CD8-positive, alpha-beta T cell (primary cell): ENCODE measurements at regions of chr2 and their contacts with region 1.

Region 1: DNA sequence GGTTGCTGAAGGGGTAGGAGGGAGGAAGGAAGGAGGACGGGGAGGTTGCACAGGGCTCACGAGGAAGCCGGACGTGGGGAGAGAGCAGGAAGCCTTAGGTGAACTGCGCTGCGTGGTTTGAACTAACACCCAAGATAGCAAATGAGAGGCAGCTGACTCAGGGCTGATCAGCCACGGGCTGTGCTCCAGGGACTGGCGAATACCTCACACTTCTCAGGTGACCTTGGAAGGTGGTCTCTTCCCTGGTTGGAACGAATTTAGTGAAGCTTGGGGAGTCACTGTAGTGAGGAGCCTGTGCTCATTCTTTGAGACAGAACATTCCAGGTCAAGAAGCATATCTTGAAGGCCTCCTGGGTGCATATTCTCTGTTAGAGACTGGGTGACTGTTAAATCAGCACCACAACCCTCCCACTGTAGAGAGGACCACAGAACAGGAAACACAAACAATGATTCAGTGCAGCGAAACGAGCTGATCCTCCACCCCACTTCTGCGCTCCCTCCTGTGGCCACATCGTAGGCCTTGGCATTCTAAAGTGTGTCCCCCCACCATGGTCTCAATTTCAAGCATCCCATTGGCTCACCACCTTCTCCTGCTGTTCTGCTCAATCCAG is 33.8 kb downstream of the TOGARAM2 start:
- DNase-seq: peak; percentile 46 to 93 (median 82)
- ATAC-seq: peak; percentile 57
- H3K4me3 ChIP-seq: peak overlapping the region; percentile 27 to 37
- H3K4me3 Mint-ChIP-seq: peak overlapping the region; percentile 75
- H3K27ac ChIP-seq: peak overlapping the region; percentile 85 to 98
- H3K27ac Mint-ChIP-seq: peak overlapping the region; percentile 99
- H3K4me1 ChIP-seq: peaks cover 72% of the 10 kb centered on the region
- H3K4me1 Mint-ChIP-seq: peaks cover 76% of the 10 kb centered on the region
- H3K27me3 ChIP-seq: no peaks in the 10 kb centered on the region
- H3K27me3 Mint-ChIP-seq: no peaks in the 10 kb centered on the region
- CTCF ChIP-seq: peak; percentile 63

Region 2: DNA sequence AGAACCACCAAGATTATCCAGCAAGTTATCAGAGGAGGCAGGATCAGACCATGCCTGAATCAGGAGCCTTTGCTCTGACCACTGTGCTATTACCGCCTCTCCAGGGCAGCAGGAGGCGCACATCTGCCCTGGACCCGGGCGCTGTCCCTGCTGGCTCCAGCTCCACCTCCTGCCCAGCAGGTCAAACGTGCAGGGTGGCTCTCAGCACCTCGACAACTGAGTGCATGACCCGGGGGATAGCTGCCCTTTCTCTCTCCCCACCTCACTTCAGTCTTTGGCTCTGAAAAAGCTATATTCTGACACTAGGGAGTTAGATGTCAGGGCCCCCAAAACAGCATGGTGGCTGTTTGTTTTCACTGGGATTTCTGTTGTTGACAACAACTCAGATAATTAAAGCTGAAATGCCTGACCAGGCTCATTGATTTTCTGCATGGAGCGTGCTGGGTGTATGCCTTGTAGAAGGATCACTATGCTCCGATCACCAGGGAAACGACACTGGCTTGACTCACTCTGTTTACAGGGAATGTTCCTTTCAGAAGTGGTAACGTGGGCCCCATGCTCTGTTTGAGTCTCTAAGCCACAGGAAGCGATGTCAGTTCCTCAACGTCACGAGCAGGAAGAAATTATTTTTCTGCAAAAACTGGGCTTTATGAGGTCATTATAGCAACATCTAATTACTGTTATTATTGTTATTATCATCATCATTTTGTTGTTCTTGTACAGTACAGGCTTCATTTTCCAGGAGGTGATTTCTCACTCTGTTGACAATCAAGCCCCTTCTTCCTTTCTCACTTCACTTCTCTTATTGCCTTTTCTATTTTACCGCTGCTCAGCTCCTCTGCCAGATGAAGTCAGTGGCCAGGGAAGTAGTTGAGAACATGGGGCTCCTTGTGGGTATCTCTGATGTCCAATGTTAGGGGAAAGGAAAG is 393.5 kb before region 1 on chr2:
- CTCF ChIA-PET with region 1: no interaction called
- POLR2A ChIA-PET with region 1: no interaction called
- intact Hi-C with region 1: loop called in 1 of 2 experiments (anchors 2 kb)
- DNase-seq: peak; percentile 60 to 96 (median 78)
- ATAC-seq: peak; percentile 85
- H3K4me3 ChIP-seq: peak overlapping the region; percentile 19 to 33
- H3K4me3 Mint-ChIP-seq: peak overlapping the region; percentile 68
- H3K27ac ChIP-seq: peak overlapping the region; percentile 86 to 98
- H3K27ac Mint-ChIP-seq: peak overlapping the region; percentile 99
- H3K4me1 ChIP-seq: peaks cover 87% of the 10 kb centered on the region
- H3K4me1 Mint-ChIP-seq: peaks cover 92% of the 10 kb centered on the region
- H3K27me3 ChIP-seq: no peaks in the 10 kb centered on the region
- H3K27me3 Mint-ChIP-seq: no peaks in the 10 kb centered on the region
- CTCF ChIP-seq: no peak

Region 3: DNA sequence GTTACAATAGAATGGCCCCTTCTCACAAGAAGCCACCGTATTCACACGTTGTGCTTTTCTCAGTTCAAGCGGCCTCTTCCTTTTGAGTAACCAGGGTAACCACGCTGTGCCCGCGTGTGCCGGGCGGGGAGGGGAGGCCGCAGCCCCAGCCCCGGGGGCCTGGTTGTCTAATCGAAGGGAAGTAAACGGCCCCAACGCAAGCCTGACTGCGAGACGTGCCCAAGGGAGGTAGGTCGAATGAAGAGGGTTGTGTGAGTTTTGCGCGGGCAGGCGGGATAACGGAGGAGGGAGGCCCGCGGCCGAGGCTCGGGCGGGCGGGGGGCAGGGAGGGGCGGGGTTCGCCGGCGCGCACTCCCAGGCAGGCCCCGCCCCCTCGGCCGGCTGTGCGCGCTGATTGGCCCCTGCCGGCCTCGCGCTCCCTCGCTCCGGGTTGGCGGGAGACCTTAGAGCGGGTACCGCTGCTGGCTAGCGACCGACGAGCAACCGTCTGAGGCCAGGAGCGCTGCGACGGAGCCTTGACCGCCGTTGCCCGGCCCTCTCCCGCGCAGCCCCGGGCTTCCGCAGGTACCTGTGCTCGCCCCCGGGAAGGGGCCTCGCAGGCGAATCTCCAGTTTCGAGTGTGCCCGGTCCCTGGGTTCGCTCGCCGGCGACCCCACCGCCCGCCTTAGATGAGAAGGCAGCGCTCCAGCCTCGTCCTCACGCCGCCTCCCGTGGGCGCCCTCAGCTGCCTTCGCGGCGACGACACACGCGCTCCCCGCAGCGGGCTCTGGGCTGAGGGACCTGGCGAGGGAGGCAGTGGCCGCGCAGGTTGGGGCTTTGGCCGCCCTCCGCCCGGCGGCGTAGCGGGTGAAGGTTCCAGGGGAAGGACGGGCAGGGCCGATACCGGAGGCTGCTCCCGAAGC is 204.3 kb before region 1 on chr2 and contains the start of gene SPDYA:
- CTCF ChIA-PET with region 1: no interaction called
- POLR2A ChIA-PET with region 1: no interaction called
- intact Hi-C with region 1: loop called in 1 of 2 experiments (anchors 10 kb)
- DNase-seq: peak; percentile 52 to 89 (median 76)
- ATAC-seq: peak; percentile 92
- H3K4me3 ChIP-seq: peak within 1 kb of the TSS; percentile 62 to 69
- H3K4me3 Mint-ChIP-seq: peak within 1 kb of the TSS; percentile 86
- H3K27ac ChIP-seq: peak within 1 kb of the TSS; percentile 24 to 69
- H3K27ac Mint-ChIP-seq: no peak within 1 kb of the TSS
- H3K4me1 ChIP-seq: peaks cover 6% of the 10 kb centered on the region
- H3K4me1 Mint-ChIP-seq: peaks cover 18% of the 10 kb centered on the region
- H3K27me3 ChIP-seq: no peaks in the 10 kb centered on the region
- H3K27me3 Mint-ChIP-seq: no peaks in the 10 kb centered on the region
- CTCF ChIP-seq: no peak
- total RNA-seq, gene SPDYA: 11.8 to 12.4 TPM

Region 4: GRCh38 chr2:28894470-28895177 is 120.3 kb before region 1 on chr2 and contains the start of gene WDR43:
- CTCF ChIA-PET with region 1: no interaction called
- POLR2A ChIA-PET with region 1: interaction called, 5 read pairs
- intact Hi-C with region 1: loop called (anchors 1 to 2 kb)
- DNase-seq: peak; percentile 94 to 99 (median 98)
- ATAC-seq: peak; percentile 98
- H3K4me3 ChIP-seq: peak within 1 kb of the TSS; percentile 81 to 89
- H3K4me3 Mint-ChIP-seq: peak within 1 kb of the TSS; percentile 96
- H3K27ac ChIP-seq: peak within 1 kb of the TSS; percentile 68 to 81
- H3K27ac Mint-ChIP-seq: peak within 1 kb of the TSS; percentile 92
- H3K4me1 ChIP-seq: peaks cover 37% of the 10 kb centered on the region
- H3K4me1 Mint-ChIP-seq: peaks cover 44% of the 10 kb centered on the region
- H3K27me3 ChIP-seq: no peaks in the 10 kb centered on the region
- H3K27me3 Mint-ChIP-seq: no peaks in the 10 kb centered on the region
- CTCF ChIP-seq: no peak
- total RNA-seq, gene WDR43: 89.2 to 90.0 TPM

Region 5: DNA sequence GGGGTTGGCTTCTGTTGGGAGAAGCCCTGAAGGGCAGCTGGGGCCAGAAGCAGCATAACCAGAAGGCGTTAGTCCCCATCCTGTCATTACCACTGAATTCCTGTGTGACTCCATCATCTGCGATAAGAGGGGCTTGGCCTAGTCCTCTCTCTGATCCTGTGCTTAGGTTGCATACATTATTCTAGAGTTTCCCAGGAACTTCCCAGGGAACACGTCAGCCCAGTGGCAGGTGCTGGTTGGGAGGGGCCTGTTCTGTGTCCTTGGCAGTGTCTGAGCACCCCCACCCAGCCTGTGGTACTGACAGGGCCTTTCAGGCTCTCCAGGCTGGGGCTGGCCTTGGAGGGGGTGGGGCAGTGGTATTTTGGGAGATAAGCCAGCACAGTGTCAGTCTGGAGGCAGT is 38.3 kb before region 1 on chr2:
- CTCF ChIA-PET with region 1: interaction called, 10 read pairs
- POLR2A ChIA-PET with region 1: no interaction called
- intact Hi-C with region 1: loop called in 1 of 2 experiments (anchors 5 kb)
- DNase-seq: no peak
- ATAC-seq: no peak
- H3K4me3 ChIP-seq: no peak overlapping the region
- H3K4me3 Mint-ChIP-seq: no peak overlapping the region
- H3K27ac ChIP-seq: no peak overlapping the region
- H3K27ac Mint-ChIP-seq: no peak overlapping the region
- H3K4me1 ChIP-seq: peaks cover 8% of the 10 kb centered on the region
- H3K4me1 Mint-ChIP-seq: peaks cover 14% of the 10 kb centered on the region
- H3K27me3 ChIP-seq: no peaks in the 10 kb centered on the region
- H3K27me3 Mint-ChIP-seq: no peaks in the 10 kb centered on the region
- CTCF ChIP-seq: no peak

Region 6: DNA sequence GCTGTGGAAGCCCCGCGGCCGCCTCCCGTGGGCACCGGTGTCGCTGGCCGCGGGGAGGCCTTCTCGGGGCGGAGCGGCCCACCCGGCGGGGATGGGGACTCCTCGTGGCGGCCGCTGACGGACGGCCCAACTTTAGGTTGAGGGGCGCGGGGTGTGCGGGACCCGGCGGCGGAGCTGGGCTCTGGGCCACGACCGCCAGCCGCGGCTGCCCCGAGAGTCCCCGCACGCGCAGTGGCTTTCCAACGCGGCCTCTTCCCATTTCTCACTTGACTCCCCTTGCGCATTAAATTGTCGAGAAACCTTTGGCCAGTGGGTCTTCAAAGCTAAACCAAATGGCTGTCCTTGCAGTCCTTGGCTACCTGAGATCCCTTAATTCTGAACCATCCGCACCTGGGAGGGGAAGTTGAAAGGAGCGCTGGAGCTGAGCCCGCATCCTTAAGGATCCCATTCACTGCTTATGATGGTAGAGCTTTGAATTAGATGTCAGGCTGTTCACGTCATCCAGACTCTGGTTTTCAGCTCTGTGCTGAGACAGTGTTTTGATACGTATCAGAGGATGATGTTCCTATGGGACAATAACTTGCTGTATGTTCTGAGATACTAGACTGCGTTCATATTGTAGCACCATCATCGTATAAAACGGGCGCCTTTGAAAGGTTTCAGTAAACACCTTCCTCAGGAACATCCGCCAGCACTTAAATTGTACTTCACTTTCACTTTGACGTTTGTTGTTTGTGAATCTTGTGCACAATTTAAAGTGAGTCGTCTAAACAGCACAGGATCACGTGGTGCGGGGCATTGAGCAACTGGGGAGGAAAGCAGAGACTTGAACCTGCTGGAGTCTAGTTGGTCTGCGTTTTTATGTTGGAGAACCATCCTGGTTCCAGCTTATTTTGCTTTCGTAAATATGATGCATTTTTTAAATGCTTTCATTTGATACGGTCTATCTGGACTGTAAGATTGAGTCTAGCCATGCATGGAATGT is 101.2 kb after region 1 on chr2:
- CTCF ChIA-PET with region 1: interaction called, 3 read pairs
- POLR2A ChIA-PET with region 1: interaction called, 35 read pairs
- intact Hi-C with region 1: loop called (anchors 1 kb)
- DNase-seq: peak; percentile 43 to 89 (median 73)
- ATAC-seq: peak; percentile 59
- H3K4me3 ChIP-seq: peak overlapping the region; percentile 80 to 82
- H3K4me3 Mint-ChIP-seq: peak overlapping the region; percentile 91
- H3K27ac ChIP-seq: peak overlapping the region; percentile 86 to 92
- H3K27ac Mint-ChIP-seq: peak overlapping the region; percentile 95
- H3K4me1 ChIP-seq: peaks cover 39% of the 10 kb centered on the region
- H3K4me1 Mint-ChIP-seq: peaks cover 54% of the 10 kb centered on the region
- H3K27me3 ChIP-seq: no peaks in the 10 kb centered on the region
- H3K27me3 Mint-ChIP-seq: no peaks in the 10 kb centered on the region
- CTCF ChIP-seq: no peak

Region 7: GRCh38 chr2:29480426-29480825 is 465.5 kb after region 1 on chr2:
- CTCF ChIA-PET with region 1: no interaction called
- POLR2A ChIA-PET with region 1: no interaction called
- intact Hi-C with region 1: no loop called
- DNase-seq: no peak
- ATAC-seq: no peak
- H3K4me3 ChIP-seq: no peak overlapping the region
- H3K4me3 Mint-ChIP-seq: no peak overlapping the region
- H3K27ac ChIP-seq: no peak overlapping the region
- H3K27ac Mint-ChIP-seq: no peak overlapping the region
- H3K4me1 ChIP-seq: no peaks in the 10 kb centered on the region
- H3K4me1 Mint-ChIP-seq: no peaks in the 10 kb centered on the region
- H3K27me3 ChIP-seq: peaks cover 0 to 4% of the 10 kb centered on the region in 2 experiments
- H3K27me3 Mint-ChIP-seq: peaks cover 11% of the 10 kb centered on the region
- CTCF ChIP-seq: no peak

Region 8: DNA sequence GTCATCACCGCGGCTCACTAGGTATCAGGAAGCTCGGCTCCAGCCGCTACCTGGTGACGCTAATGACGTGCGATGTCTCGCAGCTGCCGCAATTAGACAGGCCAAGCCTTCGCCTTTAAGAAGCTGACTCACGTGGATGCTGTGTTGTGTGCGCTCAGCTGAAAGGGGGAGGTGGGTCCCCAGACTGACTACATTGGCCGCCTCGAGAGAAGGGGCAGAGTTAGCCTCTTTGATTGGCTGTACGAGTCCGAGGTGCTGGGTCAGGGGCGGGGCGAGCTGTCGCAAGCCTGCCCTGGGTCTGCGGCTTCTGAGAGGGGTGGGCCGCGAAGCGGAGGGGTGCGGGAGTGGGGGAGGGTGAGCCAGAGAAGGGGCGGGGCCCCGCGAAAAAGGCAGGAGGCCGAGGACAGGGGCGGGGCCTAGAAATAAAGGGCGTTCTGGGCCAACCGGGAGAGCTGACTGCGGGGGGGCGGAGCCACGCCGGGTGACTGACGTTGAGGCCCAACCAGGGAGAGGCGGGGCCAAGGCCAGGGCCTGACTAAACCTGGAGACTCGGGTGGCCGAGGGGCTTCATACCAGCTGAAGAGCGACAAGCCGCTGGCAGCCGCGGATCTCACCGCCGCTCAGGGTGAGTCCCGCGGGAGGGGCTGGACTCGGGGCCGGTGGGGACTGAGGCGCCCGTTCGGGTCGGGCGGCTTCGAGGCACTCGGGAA is 1131.7 kb after region 1 on chr2 and contains the start of gene YPEL5:
- CTCF ChIA-PET with region 1: no interaction called
- POLR2A ChIA-PET with region 1: no interaction called
- intact Hi-C with region 1: loop called in 1 of 2 experiments (anchors 5 kb)
- DNase-seq: peak; percentile 99 to 100 (median 100)
- ATAC-seq: peak; percentile 82
- H3K4me3 ChIP-seq: peak within 1 kb of the TSS; percentile 75 to 76
- H3K4me3 Mint-ChIP-seq: peak within 1 kb of the TSS; percentile 89
- H3K27ac ChIP-seq: peak within 1 kb of the TSS; percentile 97 to 100
- H3K27ac Mint-ChIP-seq: peak within 1 kb of the TSS; percentile 100
- H3K4me1 ChIP-seq: peaks cover 50% of the 10 kb centered on the region
- H3K4me1 Mint-ChIP-seq: peaks cover 60% of the 10 kb centered on the region
- H3K27me3 ChIP-seq: no peaks in the 10 kb centered on the region
- H3K27me3 Mint-ChIP-seq: no peaks in the 10 kb centered on the region
- CTCF ChIP-seq: no peak
- total RNA-seq, gene YPEL5: 1,051 to 1,071 TPM